Calu3 (cell line): ENCODE measurements at regions of chr1 and their contacts with region 1.

Region 1: DNA sequence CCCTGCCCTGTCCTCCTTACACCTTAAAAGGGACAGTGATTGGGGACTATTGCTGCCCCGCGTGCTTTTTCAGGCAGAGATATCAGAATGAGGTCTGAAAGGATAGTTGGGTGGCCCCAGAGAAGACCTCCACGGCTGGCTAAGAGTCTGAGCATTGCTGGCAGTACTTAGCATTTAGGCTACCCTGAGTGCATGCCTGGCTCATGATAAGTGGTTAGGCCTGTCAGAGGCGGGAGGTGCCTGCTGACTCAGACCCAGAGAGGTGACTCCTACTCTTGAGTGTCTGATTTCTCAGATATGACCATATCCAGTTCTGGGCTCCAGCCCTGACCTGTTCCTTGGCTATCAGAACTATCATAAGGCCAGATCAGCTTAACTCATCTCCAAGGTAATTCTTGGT is 213.7 kb downstream of the PBX1 start:
- DNase-seq: peak; percentile 74
- H3K4me3 Mint-ChIP-seq: no peak overlapping the region
- H3K27ac Mint-ChIP-seq: peak overlapping the region; percentile 26
- H3K4me1 Mint-ChIP-seq: peaks cover 90% of the 10 kb centered on the region
- H3K27me3 Mint-ChIP-seq: no peaks in the 10 kb centered on the region
- CTCF ChIP-seq: no peak

Region 2: DNA sequence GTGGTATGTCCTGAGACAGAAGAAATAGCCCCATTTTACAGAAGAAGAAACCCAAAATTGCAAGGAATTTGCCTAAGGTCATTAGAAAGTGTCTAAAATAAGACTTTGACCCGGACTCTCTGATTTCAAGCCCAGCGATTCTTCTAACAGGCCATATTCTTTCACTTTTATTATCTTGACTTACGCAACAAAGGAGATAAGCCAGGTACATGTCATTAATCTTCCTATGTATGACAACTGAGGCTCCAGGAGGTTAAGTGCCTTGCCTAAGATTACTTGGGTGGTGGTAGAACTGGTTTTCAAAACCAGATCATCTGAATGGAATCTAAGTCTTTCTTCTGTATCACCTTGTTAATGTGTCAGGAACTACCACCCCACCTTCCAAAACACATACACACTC is 89.4 kb before region 1 on chr1:
- CTCF ChIA-PET with region 1: interaction called, 3 read pairs
- intact Hi-C with region 1: loop called (anchors 5 kb)
- DNase-seq: peak; percentile 49
- H3K4me3 Mint-ChIP-seq: peak overlapping the region; percentile 52
- H3K27ac Mint-ChIP-seq: peak overlapping the region; percentile 90
- H3K4me1 Mint-ChIP-seq: peaks cover 27% of the 10 kb centered on the region
- H3K27me3 Mint-ChIP-seq: no peaks in the 10 kb centered on the region
- CTCF ChIP-seq: no peak

Region 3: DNA sequence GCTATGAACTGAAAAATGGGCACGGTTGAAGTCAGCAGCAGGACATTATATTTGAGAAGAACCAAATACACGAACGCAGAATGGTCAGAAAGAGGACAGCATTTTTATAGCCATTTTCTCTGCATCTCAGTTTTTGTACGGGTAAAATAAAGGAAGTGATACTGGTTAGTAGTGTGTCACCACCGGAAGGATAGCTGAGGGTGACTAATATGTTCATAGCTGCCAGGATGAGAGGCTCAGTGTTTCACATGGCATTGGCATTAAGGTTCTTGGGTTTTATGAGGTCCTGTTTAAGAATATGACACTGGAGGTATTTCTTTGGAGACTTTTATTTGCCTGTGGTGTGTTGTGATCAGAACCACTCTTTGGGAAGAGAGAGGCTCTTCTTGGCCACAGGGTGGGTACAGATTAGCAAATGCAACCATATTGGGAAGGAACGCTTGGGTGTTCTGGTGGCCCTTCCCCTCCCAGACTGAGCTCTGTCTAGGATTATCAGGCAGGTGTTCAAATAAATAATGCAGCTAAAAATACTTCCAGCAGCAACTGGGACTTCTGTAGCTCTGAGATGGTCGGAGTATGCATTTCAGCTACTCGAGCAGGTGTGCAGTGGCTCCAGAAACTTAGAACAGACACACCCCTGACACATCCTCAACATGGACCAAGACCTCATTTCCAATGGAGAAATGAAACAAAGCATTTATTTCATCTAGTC is 55.5 kb before region 1 on chr1:
- CTCF ChIA-PET with region 1: no interaction called
- intact Hi-C with region 1: no loop called
- DNase-seq: no peak
- H3K4me3 Mint-ChIP-seq: no peak overlapping the region
- H3K27ac Mint-ChIP-seq: no peak overlapping the region
- H3K4me1 Mint-ChIP-seq: peaks cover 8% of the 10 kb centered on the region
- H3K27me3 Mint-ChIP-seq: no peaks in the 10 kb centered on the region
- CTCF ChIP-seq: no peak

Region 4: GRCh38 chr1:165011991-165012531 is 239.4 kb after region 1 on chr1:
- CTCF ChIA-PET with region 1: no interaction called
- intact Hi-C with region 1: no loop called
- DNase-seq: no peak
- H3K4me3 Mint-ChIP-seq: no peak overlapping the region
- H3K27ac Mint-ChIP-seq: no peak overlapping the region
- H3K4me1 Mint-ChIP-seq: no peaks in the 10 kb centered on the region
- H3K27me3 Mint-ChIP-seq: no peaks in the 10 kb centered on the region
- CTCF ChIP-seq: no peak